Panc1 (cell line): ENCODE measurements at regions of chr13 and their contacts with region 1.

Region 1: DNA sequence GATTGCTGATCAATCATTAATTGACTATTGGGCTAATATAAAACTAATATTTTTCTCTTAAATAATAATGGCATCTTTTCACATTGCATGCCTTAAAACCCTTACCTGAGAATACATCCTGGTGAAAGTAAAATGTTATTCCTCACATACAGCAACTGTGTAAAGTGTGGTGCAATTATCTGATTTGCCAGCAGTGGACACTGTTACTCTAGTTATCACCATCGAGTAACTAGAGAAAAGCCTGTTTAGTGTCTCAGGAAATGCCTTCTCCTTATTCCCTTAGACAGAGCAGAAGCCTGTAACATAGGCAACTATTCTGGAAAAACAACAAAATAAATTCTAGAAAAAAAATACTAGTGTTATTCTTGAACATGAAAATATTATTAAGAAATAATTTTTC is 459.8 kb downstream of the FGF14 start:
- DNase-seq: peak; percentile 13
- ATAC-seq: peak; percentile 82
- H3K4me3 ChIP-seq: no peak overlapping the region
- H3K27ac ChIP-seq: no peak overlapping the region
- H3K4me1 ChIP-seq: no peaks in the 10 kb centered on the region
- H3K27me3 ChIP-seq: peaks cover 3% of the 10 kb centered on the region; the same call in 1 of the 2 replicates
- CTCF ChIP-seq: peak; percentile 58; the same call in 1 of the 2 replicates

Region 2: DNA sequence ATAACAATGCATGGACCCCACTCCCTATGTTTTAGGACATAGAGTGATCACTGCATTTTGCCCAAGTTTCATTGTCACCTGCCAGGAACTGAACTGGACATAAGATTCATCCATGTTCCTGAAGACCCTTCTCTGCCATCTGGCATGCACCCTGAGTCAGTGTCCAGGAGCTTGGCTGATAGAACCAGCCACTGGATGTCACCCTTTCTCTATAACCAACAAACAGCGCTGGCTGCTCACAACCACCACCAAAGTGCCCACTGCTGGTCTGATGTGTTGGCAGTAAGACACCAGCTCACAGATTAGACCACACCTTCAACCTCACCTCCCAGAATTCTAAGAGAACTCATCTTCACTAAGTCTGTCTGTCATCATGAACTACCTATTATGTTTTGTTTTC is 156.2 kb before region 1 on chr13:
- CTCF ChIA-PET with region 1: no interaction called
- POLR2A ChIA-PET with region 1: no interaction called
- in situ Hi-C with region 1: no loop called
- intact Hi-C with region 1: loop called (anchors 5 kb)
- DNase-seq: peak; percentile 4
- ATAC-seq: peak; percentile 94
- H3K4me3 ChIP-seq: no peak overlapping the region
- H3K27ac ChIP-seq: no peak overlapping the region
- H3K4me1 ChIP-seq: no peaks in the 10 kb centered on the region
- H3K27me3 ChIP-seq: no peaks in the 10 kb centered on the region
- CTCF ChIP-seq: peak; percentile 54

Region 3: GRCh38 chr13:101967781-101968180 is 25.7 kb after region 1 on chr13:
- CTCF ChIA-PET with region 1: no interaction called
- POLR2A ChIA-PET with region 1: no interaction called
- in situ Hi-C with region 1: no loop called
- intact Hi-C with region 1: no loop called
- DNase-seq: no peak
- ATAC-seq: no peak
- H3K4me3 ChIP-seq: no peak overlapping the region
- H3K27ac ChIP-seq: no peak overlapping the region
- H3K4me1 ChIP-seq: no peaks in the 10 kb centered on the region
- H3K27me3 ChIP-seq: no peaks in the 10 kb centered on the region
- CTCF ChIP-seq: no peak

Region 4: GRCh38 chr13:102035969-102036368 is 93.9 kb after region 1 on chr13:
- CTCF ChIA-PET with region 1: no interaction called
- POLR2A ChIA-PET with region 1: no interaction called
- in situ Hi-C with region 1: no loop called
- intact Hi-C with region 1: no loop called
- DNase-seq: no peak
- ATAC-seq: no peak
- H3K4me3 ChIP-seq: no peak overlapping the region
- H3K27ac ChIP-seq: no peak overlapping the region
- H3K4me1 ChIP-seq: no peaks in the 10 kb centered on the region
- H3K27me3 ChIP-seq: no peaks in the 10 kb centered on the region
- CTCF ChIP-seq: no peak

Region 5: DNA sequence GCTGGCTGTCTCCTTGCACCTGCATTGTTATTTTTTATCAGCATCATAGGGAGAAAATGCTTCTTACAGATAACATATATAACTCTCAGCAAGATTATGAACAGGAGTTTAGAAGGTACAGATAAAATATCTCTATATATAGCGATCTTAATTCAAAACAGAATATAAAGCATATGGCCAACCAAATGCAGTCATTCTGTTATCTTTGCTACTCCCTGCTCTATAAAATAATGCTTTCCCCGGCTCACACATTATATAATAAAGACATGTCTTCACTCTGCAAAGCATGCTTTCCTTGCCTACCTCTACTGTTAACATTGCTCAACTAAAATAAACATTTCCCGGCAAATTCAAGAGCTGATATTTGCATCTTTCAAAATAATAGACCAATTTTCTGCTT is 298.1 kb after region 1 on chr13:
- CTCF ChIA-PET with region 1: no interaction called
- POLR2A ChIA-PET with region 1: no interaction called
- in situ Hi-C with region 1: no loop called
- intact Hi-C with region 1: no loop called
- DNase-seq: no peak
- ATAC-seq: no peak
- H3K4me3 ChIP-seq: no peak overlapping the region
- H3K27ac ChIP-seq: no peak overlapping the region
- H3K4me1 ChIP-seq: no peaks in the 10 kb centered on the region
- H3K27me3 ChIP-seq: no peaks in the 10 kb centered on the region; the same call in 1 of the 2 replicates
- CTCF ChIP-seq: no peak

Region 6: DNA sequence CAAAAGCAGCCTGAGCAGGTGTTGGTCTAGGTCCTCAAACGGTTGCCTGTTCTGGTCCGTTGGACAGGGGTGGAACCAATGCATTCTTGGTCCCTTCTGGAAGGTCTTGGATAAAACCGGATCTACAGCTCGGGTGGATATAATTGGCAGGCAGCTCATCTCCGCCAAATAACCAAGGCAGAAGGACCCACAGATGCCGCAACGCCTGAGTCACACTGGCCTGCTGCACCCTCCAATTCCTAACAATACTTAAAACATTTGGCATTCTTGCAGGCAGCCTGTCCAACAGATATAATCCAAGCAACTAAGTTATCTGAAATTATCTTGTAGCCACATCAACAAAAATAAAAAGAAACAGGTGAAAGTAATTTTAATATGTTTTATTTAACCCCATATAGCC is 518.8 kb after region 1 on chr13:
- CTCF ChIA-PET with region 1: no interaction called
- POLR2A ChIA-PET with region 1: no interaction called
- in situ Hi-C with region 1: no loop called
- intact Hi-C with region 1: loop called (anchors 5 kb)
- DNase-seq: no peak
- ATAC-seq: no peak
- H3K4me3 ChIP-seq: no peak overlapping the region
- H3K27ac ChIP-seq: no peak overlapping the region
- H3K4me1 ChIP-seq: no peaks in the 10 kb centered on the region
- H3K27me3 ChIP-seq: no peaks in the 10 kb centered on the region
- CTCF ChIP-seq: no peak

Region 7: DNA sequence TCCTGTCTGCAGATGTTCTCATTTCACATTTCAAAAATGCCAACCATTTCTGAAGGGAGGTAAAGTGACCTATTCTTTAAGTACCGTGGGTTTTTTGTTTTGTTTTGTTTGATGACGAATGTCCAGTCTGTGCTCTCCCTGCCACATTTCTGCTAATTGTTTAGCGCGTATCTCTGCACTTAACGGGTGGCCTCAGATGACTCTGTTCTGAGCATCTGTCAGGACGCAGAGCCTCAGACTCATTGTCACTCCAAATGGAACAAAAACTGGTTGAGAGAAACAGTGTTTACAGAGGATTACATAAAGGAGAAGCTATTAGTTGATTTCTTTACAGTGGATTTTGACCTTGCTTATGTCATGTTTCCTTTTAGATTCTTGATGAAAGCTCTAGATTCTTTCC is 678.5 kb after region 1 on chr13:
- CTCF ChIA-PET with region 1: no interaction called
- POLR2A ChIA-PET with region 1: no interaction called
- in situ Hi-C with region 1: no loop called
- intact Hi-C with region 1: no loop called
- DNase-seq: no peak
- ATAC-seq: no peak
- H3K4me3 ChIP-seq: no peak overlapping the region
- H3K27ac ChIP-seq: no peak overlapping the region
- H3K4me1 ChIP-seq: no peaks in the 10 kb centered on the region
- H3K27me3 ChIP-seq: no peaks in the 10 kb centered on the region
- CTCF ChIP-seq: no peak